ENCODE measurements at regions of chr17 and their contacts with region 1.

Region 1: GRCh38 chr17:43576563-43577229 is 30.6 kb upstream of the ETV4 start:
- DNase-seq: peak; percentile 58 to 89 (median 76)
- ATAC-seq: peak; percentile 89
- H3K4me3 ChIP-seq: no peak overlapping the region
- H3K27ac ChIP-seq: no peak overlapping the region
- H3K4me1 ChIP-seq: peaks cover 7% of the 10 kb centered on the region in 2 donors
- H3K27me3 ChIP-seq: peaks cover 0 to 5% of the 10 kb centered on the region in 2 donors
- CTCF ChIP-seq: peak; percentile 88 to 91

Region 2: DNA sequence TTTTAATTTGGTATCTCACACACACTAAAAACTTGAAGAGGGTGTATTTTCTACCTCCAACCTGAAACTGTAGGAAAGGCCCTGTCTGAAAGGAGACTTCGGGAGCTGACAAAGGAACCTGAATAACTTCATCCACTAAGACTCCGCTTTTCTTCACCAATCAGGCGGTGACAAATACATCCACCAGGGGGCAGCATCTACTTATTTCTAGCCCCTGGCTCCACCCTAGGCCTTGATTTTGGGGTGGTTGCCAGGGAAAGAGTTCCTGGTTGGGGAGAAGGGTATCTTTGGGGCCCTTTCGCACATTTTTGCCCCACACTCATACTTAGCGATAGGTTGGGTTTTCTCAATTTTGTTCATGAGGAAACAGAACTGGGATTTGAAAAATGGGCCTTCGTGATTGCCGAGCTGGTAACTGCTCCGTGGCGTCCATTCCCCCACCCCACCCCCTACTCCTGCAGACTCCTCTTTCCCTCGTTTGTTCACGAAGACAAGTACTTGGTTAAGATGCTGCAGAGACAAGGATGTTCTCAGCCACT is 182.7 kb before region 1 on chr17:
- intact Hi-C with region 1: no loop called
- DNase-seq: peak in 3 of 4 donors; percentile 86 to 92 (median 89)
- ATAC-seq: peak; percentile 68
- H3K4me3 ChIP-seq: no peak overlapping the region
- H3K27ac ChIP-seq: peak overlapping the region in 1 of 2 donors; percentile 55
- H3K4me1 ChIP-seq: peaks cover 4 to 37% of the 10 kb centered on the region in 2 donors
- H3K27me3 ChIP-seq: no peaks in the 10 kb centered on the region
- CTCF ChIP-seq: peak; percentile 90 to 92

Region 3: DNA sequence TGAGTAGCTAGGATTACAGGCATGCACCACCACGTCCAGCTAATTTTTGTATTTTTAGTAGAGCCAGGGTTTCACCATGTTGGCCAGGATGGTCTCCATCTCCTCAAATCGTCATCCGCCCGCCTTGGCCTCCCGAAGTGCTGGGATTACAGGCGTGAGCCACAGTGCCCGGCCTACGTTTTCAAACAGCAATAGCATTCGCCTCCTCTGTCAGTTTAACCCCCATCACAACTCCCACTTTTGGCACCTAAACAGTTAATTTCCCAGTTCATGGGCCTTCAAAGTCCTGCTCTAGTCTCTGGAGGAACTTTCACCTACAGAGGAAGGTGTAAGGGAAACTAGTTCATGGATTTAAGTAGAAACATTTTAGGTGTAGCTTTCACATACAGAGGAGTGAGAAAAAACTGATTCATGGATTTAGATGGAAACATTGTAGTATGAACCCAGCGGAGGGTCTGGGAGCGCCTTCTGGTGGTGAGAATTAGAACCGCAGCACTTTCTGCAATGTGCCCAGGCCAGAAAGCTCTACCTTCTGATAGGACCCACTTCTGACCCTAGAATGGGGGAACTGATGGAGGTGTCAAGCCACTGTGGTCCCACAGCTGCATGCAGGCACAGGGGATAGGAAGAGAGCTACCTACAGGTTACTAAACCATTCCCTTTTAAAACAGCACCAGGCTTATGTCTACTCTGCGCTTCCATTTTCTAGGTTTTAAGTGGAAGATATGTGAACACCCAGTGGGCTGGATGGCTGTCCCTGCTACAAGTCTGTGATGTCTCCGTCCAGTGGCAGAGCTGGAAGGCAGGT is 97.0 kb after region 1 on chr17:
- intact Hi-C with region 1: loop called in 1 of 2 experiments (anchors 2 kb)
- DNase-seq: peak in 3 of 4 donors; percentile 56 to 72 (median 58)
- ATAC-seq: peak; percentile 83
- H3K4me3 ChIP-seq: no peak overlapping the region
- H3K27ac ChIP-seq: no peak overlapping the region
- H3K4me1 ChIP-seq: peaks cover 0 to 16% of the 10 kb centered on the region in 2 donors
- H3K27me3 ChIP-seq: no peaks in the 10 kb centered on the region
- CTCF ChIP-seq: peak; percentile 90 to 94

Region 4: DNA sequence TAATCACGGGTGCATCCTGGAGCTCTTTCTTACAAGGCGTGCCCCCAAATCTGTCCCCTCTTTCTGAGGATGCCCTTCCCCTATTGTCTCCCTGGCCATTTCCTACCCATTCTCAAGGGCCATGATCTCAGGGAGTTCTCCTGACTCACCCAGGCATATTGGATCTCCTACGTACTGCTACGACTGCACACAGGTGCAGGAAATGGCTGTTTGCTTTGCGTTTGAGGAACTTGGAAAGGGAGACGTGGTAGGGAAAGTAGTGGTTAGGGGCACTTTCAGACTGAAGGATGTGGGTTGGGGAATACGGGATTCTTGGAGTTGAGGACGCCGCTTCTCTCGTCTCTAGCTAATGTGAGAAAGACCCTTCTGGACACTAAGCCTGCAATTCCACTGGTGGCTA is 103.8 kb after region 1 on chr17:
- intact Hi-C with region 1: loop called (anchors 2 to 10 kb)
- DNase-seq: no peak
- ATAC-seq: no peak
- H3K4me3 ChIP-seq: no peak overlapping the region
- H3K27ac ChIP-seq: no peak overlapping the region
- H3K4me1 ChIP-seq: peaks cover 0 to 16% of the 10 kb centered on the region in 2 donors
- H3K27me3 ChIP-seq: no peaks in the 10 kb centered on the region
- CTCF ChIP-seq: no peak

Measured in left lung (tissue), 14 donors.